Right cardiac atrium (tissue), 5 donors: ENCODE measurements at regions of chr16 and their contacts with region 1.

Region 1: GRCh38 chr16:85126705-85127419 is 14.6 kb upstream of the CIBAR2 start:
- DNase-seq: peak in 2 of 3 donors; percentile 62 to 64
- ATAC-seq: peak; percentile 20 to 47
- H3K4me3 ChIP-seq: no peak overlapping the region
- H3K27ac ChIP-seq: no peak overlapping the region
- H3K4me1 ChIP-seq: peaks cover 8% of the 10 kb centered on the region
- H3K27me3 ChIP-seq: no peaks in the 10 kb centered on the region

Region 2: GRCh38 chr16:85172455-85173145 is 45.7 kb after region 1 on chr16:
- intact Hi-C with region 1: loop called in 2 of 4 experiments (anchors 5 to 10 kb)
- DNase-seq: peak in 1 of 3 donors; percentile 67
- ATAC-seq: peak; percentile 9 to 10
- H3K4me3 ChIP-seq: peak overlapping the region; percentile 34
- H3K27ac ChIP-seq: peak overlapping the region; percentile 13
- H3K4me1 ChIP-seq: peaks cover 28% of the 10 kb centered on the region
- H3K27me3 ChIP-seq: no peaks in the 10 kb centered on the region

Region 3: GRCh38 chr16:85245307-85246172 is 118.7 kb after region 1 on chr16:
- intact Hi-C with region 1: no loop called
- DNase-seq: peak; percentile 68 to 87 (median 83)
- ATAC-seq: peak; percentile 61 to 64
- H3K4me3 ChIP-seq: no peak overlapping the region
- H3K27ac ChIP-seq: no peak overlapping the region
- H3K4me1 ChIP-seq: no peaks in the 10 kb centered on the region
- H3K27me3 ChIP-seq: no peaks in the 10 kb centered on the region